Caco-2 (cell line): ENCODE measurements at regions of chr20 and their contacts with region 1.

Region 1: GRCh38 chr20:7161690-7162089 is 394.2 kb downstream of the BMP2 start:
- DNase-seq: peak; percentile 48 to 53
- H3K4me3 ChIP-seq: no peak overlapping the region
- H3K4me3 Mint-ChIP-seq: no peak overlapping the region
- H3K27ac Mint-ChIP-seq: no peak overlapping the region
- H3K4me1 ChIP-seq: 0 out of 2 replicates have a peak, but pooled peaks cover 7% of the 10 kb centered on the region
- H3K4me1 Mint-ChIP-seq: peaks cover 17% of the 10 kb centered on the region
- H3K27me3 ChIP-seq: no peaks in the 10 kb centered on the region
- H3K27me3 Mint-ChIP-seq: no peaks in the 10 kb centered on the region
- CTCF ChIP-seq: peak; percentile 58 to 80

Region 2: DNA sequence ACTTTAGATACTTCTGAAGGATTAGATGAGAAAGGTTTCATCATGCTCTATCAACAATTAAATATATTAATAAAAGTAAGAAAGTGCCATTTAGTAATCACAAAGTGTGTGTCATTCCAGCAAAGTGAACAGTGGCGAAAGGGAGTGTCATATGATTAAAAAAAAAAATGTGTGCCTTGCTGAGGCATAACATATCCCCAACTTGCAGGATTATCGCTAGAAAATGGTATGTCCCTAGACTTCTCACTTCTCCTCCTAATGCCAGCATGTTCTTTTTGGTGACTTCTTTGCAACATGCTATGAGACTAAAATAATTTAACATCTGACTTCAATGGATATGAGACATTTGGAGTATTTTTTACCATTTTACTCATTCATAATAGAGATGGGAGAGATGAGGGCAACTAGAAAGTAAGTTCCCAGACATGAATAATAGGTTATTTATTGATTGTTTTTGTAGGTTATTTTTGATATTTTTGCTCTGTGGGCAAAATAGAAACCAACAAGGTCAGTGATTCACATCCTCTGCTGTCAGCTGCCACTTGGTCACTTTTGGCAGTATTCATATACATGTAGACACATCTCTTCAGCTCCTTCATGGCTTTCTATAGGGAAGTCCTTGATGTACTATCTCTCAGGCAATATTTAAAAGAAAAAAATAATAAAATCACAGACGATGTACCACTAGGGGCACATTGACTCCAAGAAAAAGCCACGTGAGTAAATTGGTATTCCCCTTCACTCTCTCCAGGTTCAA is 24.1 kb before region 1 on chr20:
- CTCF ChIA-PET with region 1: no interaction called
- POLR2A ChIA-PET with region 1: no interaction called
- intact Hi-C with region 1: loop called (anchors 2 kb)
- DNase-seq: no peak
- H3K4me3 ChIP-seq: no peak overlapping the region
- H3K4me3 Mint-ChIP-seq: no peak overlapping the region
- H3K27ac Mint-ChIP-seq: no peak overlapping the region
- H3K4me1 ChIP-seq: peaks cover 11% of the 10 kb centered on the region
- H3K4me1 Mint-ChIP-seq: no peaks in the 10 kb centered on the region
- H3K27me3 ChIP-seq: no peaks in the 10 kb centered on the region
- H3K27me3 Mint-ChIP-seq: no peaks in the 10 kb centered on the region
- CTCF ChIP-seq: peak; percentile 16 to 25

Region 3: DNA sequence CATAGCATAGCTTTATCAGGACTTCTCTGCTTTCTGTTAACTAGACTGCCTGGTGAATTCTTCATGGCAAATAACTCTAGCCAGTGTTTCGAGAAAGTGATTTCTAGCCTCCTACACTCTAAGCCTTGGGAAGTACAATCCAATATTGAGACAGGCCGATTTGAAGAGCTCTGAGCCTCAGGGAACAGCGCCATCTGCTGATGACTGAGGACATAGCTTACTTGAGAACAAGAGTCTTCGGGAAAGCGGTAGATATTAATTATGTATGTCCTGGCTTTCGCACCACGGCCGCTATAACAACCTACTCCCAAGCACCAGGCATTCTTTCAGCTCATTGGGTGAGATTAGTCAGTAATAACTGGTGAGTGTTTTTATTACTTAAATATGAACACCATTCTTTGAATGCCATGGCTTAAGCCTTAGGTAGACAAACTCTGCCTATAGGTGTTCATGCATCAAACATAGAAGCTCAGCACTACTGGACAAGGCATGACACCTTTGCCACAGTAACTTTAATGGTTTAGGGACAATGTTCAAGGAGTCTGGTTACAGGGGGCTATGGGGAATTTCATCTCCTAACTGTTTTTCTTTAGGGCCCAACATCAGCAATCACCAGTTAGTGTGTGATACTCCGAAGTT is 124.3 kb after region 1 on chr20:
- CTCF ChIA-PET with region 1: interaction called, 7 read pairs
- POLR2A ChIA-PET with region 1: no interaction called
- intact Hi-C with region 1: loop called (anchors 1 kb)
- DNase-seq: peak; percentile 75 to 77
- H3K4me3 ChIP-seq: no peak overlapping the region
- H3K4me3 Mint-ChIP-seq: no peak overlapping the region
- H3K27ac Mint-ChIP-seq: no peak overlapping the region
- H3K4me1 ChIP-seq: 0 out of 2 replicates have a peak, but pooled peaks cover under 1% of the 10 kb centered on the region
- H3K4me1 Mint-ChIP-seq: no peaks in the 10 kb centered on the region
- H3K27me3 ChIP-seq: no peaks in the 10 kb centered on the region
- H3K27me3 Mint-ChIP-seq: no peaks in the 10 kb centered on the region
- CTCF ChIP-seq: peak; percentile 78 to 94